Esophagus muscularis mucosa (tissue), 4 donors: ENCODE measurements at regions of chr2 and their contacts with region 1.

Region 1: DNA sequence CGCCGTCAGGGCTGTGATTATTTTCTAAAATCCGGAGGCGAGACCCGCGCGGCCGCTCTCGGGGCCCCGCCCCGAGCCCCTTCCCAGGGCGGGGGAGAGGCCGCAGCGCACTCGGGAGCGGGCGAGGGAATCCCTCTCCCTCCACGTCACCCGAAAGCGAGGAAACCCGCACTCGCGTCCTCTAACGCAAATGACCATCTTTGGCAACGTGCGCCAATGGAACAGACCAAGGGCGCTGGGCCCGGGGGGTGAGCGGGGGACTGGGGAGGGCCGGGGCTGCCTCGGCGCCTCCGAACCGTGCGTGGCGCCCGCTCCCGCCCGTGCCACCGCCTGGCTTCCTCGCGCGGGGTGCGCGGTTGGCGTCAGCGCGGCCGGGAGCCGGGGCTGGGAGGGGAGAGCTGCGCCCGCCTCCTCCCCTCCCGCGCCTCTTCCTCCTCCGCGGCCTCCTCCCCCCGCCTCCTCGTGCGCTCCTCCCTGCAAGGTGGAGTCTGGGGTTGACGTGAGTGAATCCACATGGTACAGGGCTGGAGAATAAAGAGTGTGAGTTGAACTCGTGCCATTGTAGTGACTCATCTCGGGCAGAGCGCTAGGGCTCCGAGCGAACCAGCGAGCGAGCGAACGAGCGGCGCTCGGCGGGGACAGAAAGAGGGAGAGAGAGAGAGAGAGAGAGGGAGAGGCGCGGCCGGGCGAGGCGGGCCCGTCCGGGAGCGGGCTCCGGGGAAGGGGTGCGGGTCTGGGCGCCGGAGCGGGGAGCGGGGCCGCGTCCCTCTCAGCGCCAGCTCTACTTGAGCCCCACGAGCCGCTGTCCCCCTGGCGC is at the start of gene FOSL2:
- DNase-seq: peak; percentile 100
- H3K4me3 ChIP-seq: peak within 1 kb of the TSS; percentile 86 to 98 (median 93)
- H3K27ac ChIP-seq: peak within 1 kb of the TSS; percentile 99 to 100 (median 100)
- H3K4me1 ChIP-seq: peaks cover 15 to 31% (median 24%) of the 10 kb centered on the region in 4 donors
- H3K27me3 ChIP-seq: no peaks in the 10 kb centered on the region
- CTCF ChIP-seq: no peak
- EP300 ChIP-seq: peak; percentile 93
- POLR2A ChIP-seq: peak; percentile 95
- total RNA-seq, gene FOSL2: 68.9 to 332 (median 176) TPM

Region 2: GRCh38 chr2:27703638-27704341 is 688.7 kb before region 1 on chr2:
- intact Hi-C with region 1: loop called (anchors 2 kb)
- DNase-seq: peak; percentile 98
- H3K4me3 ChIP-seq: no peak overlapping the region
- H3K27ac ChIP-seq: peak overlapping the region; percentile 81 to 91 (median 89)
- H3K4me1 ChIP-seq: peaks cover 42 to 55% (median 48%) of the 10 kb centered on the region in 4 donors
- H3K27me3 ChIP-seq: no peaks in the 10 kb centered on the region
- CTCF ChIP-seq: peak; percentile 93 to 97 (median 93)
- EP300 ChIP-seq: no peak
- POLR2A ChIP-seq: no peak

Region 3: GRCh38 chr2:27723372-27724144 is 668.9 kb before region 1 on chr2:
- intact Hi-C with region 1: loop called (anchors 5 kb)
- DNase-seq: no peak
- H3K4me3 ChIP-seq: no peak overlapping the region
- H3K27ac ChIP-seq: peak overlapping the region; percentile 69 to 82 (median 77)
- H3K4me1 ChIP-seq: peaks cover 27 to 53% (median 37%) of the 10 kb centered on the region in 4 donors
- H3K27me3 ChIP-seq: no peaks in the 10 kb centered on the region
- CTCF ChIP-seq: peak; percentile 86 to 96 (median 88)
- EP300 ChIP-seq: no peak
- POLR2A ChIP-seq: no peak

Region 4: DNA sequence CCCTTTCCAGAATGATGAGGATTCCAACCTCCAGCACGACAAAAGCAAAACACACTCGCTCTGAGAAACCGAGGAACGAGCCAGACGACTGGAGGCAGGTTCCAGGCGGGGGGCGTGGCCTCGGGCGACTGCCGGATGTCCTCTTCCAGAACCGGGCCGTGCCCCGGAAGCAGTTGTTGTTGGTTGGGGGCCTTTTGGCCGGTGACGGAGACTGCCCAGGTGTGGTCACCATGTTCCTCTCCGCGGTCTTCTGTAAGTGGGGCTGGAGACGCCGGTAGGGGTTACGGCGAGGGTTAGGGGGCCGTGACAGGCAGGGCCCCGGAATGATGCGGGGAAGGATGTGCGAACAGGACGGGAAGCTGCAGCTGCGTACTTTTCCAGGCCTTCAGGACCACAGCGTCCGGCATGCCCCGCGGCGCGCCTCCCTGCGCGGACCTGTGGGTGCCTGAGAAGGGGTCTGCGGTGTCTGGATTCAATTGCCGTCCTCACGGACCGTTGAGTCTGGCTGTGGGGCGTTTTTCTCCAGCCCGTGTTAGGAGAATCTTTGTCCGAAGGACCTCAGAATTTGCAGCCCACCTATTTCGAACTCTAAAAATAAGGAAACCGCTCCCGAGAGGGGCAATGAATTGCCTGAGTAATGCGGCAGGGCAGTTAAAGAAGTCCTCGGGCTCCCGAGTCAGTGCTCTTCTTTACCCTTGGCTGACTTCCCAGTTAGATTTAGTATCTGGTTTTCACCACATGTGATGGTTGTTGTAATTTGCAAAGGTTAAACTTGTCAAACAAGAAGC is 620.8 kb before region 1 on chr2 and contains the start of gene MRPL33:
- intact Hi-C with region 1: loop called (anchors 10 kb)
- DNase-seq: peak; percentile 99
- H3K4me3 ChIP-seq: peak within 1 kb of the TSS; percentile 68 to 77 (median 74)
- H3K27ac ChIP-seq: peak within 1 kb of the TSS; percentile 87 to 94 (median 88)
- H3K4me1 ChIP-seq: peaks cover 22 to 48% (median 47%) of the 10 kb centered on the region in 4 donors
- H3K27me3 ChIP-seq: no peaks in the 10 kb centered on the region
- CTCF ChIP-seq: no peak
- EP300 ChIP-seq: no peak
- POLR2A ChIP-seq: peak; percentile 62
- total RNA-seq, gene MRPL33: 283 to 500 (median 345) TPM

Region 5: GRCh38 chr2:27890146-27890923 is 502.2 kb before region 1 on chr2 and contains the starts of genes BABAM2 and RBKS:
- intact Hi-C with region 1: loop called (anchors 2 kb)
- DNase-seq: peak; percentile 95
- H3K4me3 ChIP-seq: peak within 1 kb of the TSS; percentile 69 to 83 (median 74)
- H3K27ac ChIP-seq: peak within 1 kb of the TSS; percentile 89 to 97 (median 91)
- H3K4me1 ChIP-seq: peaks cover 20 to 39% (median 38%) of the 10 kb centered on the region in 4 donors
- H3K27me3 ChIP-seq: no peaks in the 10 kb centered on the region
- CTCF ChIP-seq: no peak
- EP300 ChIP-seq: peak; percentile 88
- POLR2A ChIP-seq: peak; percentile 88
- total RNA-seq, gene BABAM2: 35.5 to 44.9 (median 39.9) TPM
- total RNA-seq, gene RBKS: 0.63 to 5.8 (median 2.5) TPM

Region 6: GRCh38 chr2:28276076-28276618 is 116.4 kb before region 1 on chr2:
- intact Hi-C with region 1: loop called (anchors 5 kb)
- DNase-seq: no peak
- H3K4me3 ChIP-seq: no peak overlapping the region
- H3K27ac ChIP-seq: peak overlapping the region; percentile 69 to 79 (median 76)
- H3K4me1 ChIP-seq: peaks cover 24 to 37% (median 30%) of the 10 kb centered on the region in 4 donors
- H3K27me3 ChIP-seq: no peaks in the 10 kb centered on the region
- CTCF ChIP-seq: no peak
- EP300 ChIP-seq: no peak
- POLR2A ChIP-seq: no peak

Region 7: DNA sequence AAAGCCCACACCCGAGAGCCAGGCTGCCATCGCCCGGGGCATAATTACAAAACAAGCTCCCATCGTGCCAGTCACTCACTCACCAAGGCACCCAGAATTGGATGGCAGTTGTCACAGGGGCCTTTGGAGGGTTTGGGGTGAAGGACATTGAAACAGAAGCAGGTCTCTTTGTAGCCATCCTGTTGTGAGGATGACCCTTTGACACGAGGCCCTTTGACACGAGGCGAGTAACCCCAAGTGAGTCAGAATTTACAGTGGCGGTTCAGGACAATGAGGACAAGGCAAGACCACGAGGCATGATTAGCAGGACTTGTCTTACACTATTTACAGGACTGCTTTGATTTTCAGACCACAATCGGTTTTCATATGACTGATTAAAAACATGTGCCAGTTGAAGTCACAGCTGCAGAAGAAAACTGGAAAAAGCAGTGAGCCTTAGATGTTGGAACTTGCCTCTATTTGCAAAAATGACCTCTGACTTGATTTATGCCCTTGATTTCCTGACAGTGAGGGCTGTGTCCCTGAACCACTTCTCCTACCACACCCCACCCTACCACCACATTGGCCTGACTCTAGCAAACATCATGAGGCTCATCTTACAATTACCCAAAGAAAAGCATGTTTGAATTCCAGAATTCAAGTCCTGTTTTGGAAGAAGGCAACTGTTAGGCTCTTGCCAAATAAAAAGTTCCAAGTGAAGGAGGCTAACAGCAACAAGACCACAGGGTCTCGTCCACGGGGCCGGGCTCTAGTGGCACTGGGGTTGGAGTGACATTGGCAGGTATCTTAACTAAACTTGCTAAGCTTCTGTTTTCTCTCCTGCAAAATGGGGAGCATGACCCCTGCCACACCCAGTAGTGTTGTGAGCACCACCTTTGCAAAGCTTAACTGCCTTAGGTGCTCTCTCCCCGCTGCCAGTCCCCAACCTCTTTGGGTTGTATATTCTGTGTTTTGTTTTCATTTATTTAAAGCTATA is 64.3 kb before region 1 on chr2:
- intact Hi-C with region 1: no loop called
- DNase-seq: no peak
- H3K4me3 ChIP-seq: no peak overlapping the region
- H3K27ac ChIP-seq: peak overlapping the region; percentile 14 to 61 (median 36)
- H3K4me1 ChIP-seq: peaks cover 16 to 37% (median 26%) of the 10 kb centered on the region in 4 donors
- H3K27me3 ChIP-seq: no peaks in the 10 kb centered on the region
- CTCF ChIP-seq: no peak
- EP300 ChIP-seq: no peak
- POLR2A ChIP-seq: no peak

Region 8: DNA sequence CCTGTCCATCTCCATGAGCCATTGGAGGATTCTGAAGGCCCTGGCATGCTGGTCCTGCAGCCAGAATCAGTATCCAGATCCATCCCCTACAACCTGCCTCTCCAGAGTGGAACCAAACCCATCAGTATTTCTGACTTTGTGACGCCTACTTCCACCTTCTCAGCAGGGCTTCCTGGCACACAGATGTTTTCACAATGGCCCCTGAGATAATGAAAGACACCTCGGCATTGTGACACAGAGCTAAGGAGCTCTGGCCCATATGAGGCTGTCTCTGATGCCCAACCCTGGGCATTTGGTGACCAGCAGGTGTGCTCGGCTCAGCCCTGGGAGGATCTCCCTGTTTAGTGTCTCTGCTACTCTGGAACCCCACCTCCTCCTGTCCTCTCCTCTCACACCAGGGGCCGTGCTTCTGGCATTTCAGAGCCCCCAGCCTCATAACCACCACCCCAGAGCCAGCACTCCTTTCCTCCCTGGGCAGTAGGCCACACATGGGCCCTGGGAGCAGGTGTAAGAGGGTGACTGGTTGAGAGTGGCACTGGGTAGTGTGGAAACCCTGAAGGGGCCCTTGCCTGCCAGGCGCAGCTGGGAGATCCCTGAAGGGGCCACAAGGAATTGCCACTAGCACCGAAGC is 38.4 kb after region 1 on chr2:
- intact Hi-C with region 1: no loop called
- DNase-seq: no peak
- H3K4me3 ChIP-seq: no peak overlapping the region
- H3K27ac ChIP-seq: no peak overlapping the region
- H3K4me1 ChIP-seq: no peaks in the 10 kb centered on the region
- H3K27me3 ChIP-seq: no peaks in the 10 kb centered on the region
- CTCF ChIP-seq: no peak
- EP300 ChIP-seq: no peak
- POLR2A ChIP-seq: no peak